Activated B cell treated with CpG ODN at 0.5 μM for 24 hours (primary cell): ENCODE measurements at regions of chr20 and their contacts with region 1.

Region 1: DNA sequence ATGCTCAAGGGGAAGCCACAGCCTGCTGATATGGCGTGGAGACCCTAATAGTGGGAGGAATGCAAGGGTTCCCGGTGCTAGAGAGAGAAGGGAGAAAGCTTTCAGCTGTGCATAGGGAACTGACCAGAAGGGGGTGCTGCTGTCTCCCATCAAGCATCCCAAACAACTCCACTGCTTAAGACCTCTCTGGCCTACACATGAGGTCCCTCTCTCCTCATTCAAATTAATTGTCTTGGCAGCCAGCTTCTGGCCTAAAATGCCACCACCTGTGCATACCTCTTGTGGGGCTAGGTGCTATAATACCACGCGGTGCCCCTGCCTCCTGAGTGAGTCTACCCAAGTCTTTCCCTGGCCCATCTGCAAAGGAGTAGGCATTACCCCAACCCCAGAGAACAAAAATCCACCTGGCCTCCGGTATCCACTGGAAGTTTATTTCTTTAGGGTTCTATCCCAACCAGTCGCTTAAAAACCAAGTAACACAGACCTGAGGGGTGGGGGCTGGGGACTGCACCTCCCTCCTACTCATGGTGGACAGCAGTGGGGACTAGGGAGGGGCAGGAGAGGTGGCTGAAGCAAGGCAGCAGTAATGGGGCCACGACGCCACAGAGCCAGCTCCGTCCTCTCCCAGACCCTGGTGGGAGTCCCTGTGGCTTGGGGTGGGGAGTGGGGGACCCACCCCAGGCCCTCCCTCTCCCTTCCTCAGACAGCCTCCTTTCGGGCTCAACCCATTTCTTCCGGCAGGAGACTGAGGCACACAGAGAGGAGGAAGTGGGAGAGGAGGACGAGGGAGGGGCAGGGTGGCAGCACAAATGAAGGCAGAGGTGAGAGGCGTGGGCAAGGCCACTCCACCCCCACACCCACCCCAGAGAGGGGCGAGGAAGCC is 14.2 kb downstream of the ADISSP start:
- DNase-seq: no peak
- ATAC-seq: peak; percentile 63
- H3K4me3 Mint-ChIP-seq: peak overlapping the region; percentile 12
- H3K27ac Mint-ChIP-seq: no peak overlapping the region
- H3K4me1 Mint-ChIP-seq: peaks cover 11% of the 10 kb centered on the region
- H3K27me3 Mint-ChIP-seq: no peaks in the 10 kb centered on the region
- CTCF ChIP-seq: no peak

Region 2: GRCh38 chr20:4076671-4077070 is 323.3 kb after region 1 on chr20:
- CTCF ChIA-PET with region 1: no interaction called
- POLR2A ChIA-PET with region 1: no interaction called
- intact Hi-C with region 1: loop called (anchors 1 kb)
- DNase-seq: no peak
- ATAC-seq: no peak
- H3K4me3 Mint-ChIP-seq: no peak overlapping the region
- H3K27ac Mint-ChIP-seq: no peak overlapping the region
- H3K4me1 Mint-ChIP-seq: peaks cover 6% of the 10 kb centered on the region
- H3K27me3 Mint-ChIP-seq: peaks cover 7% of the 10 kb centered on the region
- CTCF ChIP-seq: no peak